PC-9 (cell line): ENCODE measurements at regions of chr20 and their contacts with region 1.

Region 1: DNA sequence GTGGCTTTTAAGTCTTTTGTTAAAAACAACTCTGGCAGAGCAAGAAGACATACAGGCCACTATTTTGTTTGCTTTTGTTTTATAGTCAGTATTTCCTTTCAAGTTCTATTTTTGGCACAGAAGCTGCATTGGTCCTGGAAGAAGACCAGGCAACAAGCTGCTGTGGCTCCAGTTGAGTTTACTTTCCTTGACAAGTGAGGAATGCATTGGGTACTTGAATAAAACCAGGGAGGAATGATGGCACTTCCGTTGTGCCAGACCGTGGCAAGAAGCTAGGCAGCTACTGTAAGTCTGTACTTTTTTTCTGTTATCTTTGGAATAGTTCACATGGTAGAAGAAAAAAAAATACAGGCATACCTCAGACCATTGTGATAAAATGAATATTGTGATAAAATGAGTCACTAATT is 66.3 kb downstream of the NCOA3 start:
- DNase-seq: peak; percentile 71 to 83
- H3K4me3 ChIP-seq: no peak overlapping the region
- H3K27ac ChIP-seq: peak overlapping the region; percentile 61
- H3K4me1 ChIP-seq: peaks cover 58% of the 10 kb centered on the region
- H3K27me3 ChIP-seq: no peaks in the 10 kb centered on the region
- CTCF ChIP-seq: no peak

Region 2: GRCh38 chr20:47181056-47181862 is 386.7 kb before region 1 on chr20:
- CTCF ChIA-PET with region 1: no interaction called
- POLR2A ChIA-PET with region 1: interaction called, 19 read pairs
- intact Hi-C with region 1: no loop called
- DNase-seq: peak; percentile 36 to 79
- H3K4me3 ChIP-seq: no peak overlapping the region
- H3K27ac ChIP-seq: no peak overlapping the region
- H3K4me1 ChIP-seq: no peaks in the 10 kb centered on the region
- H3K27me3 ChIP-seq: no peaks in the 10 kb centered on the region
- CTCF ChIP-seq: no peak

Region 3: DNA sequence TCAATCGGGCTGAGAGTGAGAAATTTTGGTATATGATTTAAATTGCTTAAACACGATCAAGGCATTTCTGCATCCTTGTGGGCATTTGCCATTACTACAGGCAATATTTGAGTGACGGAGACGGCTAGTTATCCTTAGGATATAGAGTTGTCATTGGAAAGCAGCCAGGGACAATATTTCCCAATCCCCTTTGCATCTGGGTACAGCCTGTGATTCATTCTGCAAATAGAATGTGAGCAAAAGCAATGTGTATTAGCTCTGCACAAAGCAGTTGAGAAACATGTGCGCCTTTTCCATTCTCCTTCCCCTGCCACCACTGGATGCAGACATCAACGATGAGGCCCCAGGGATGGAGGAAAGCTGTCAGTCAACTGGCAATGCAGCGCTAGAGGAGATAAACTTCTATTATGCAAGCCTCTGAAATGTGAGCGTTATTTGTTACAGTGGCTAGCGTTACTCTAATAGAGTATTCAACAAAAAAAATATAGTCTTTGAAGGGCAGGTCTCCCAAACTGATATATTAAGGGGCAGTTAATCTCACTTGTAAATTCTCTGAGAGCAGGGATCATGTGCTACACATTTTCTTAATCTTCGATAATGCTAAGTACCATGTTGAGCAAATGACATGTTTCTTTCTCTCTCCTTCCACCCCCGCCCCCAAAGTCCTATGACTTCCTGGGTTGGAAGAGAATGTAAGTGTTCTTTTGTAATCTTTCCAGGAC is 103.5 kb before region 1 on chr20:
- CTCF ChIA-PET with region 1: no interaction called
- POLR2A ChIA-PET with region 1: no interaction called
- intact Hi-C with region 1: no loop called
- DNase-seq: peak; percentile 79 to 99
- H3K4me3 ChIP-seq: no peak overlapping the region; the same call in 1 of the 2 replicates
- H3K27ac ChIP-seq: peak overlapping the region; percentile 73
- H3K4me1 ChIP-seq: peaks cover 29% of the 10 kb centered on the region
- H3K27me3 ChIP-seq: no peaks in the 10 kb centered on the region
- CTCF ChIP-seq: peak; percentile 78

Region 4: GRCh38 chr20:47515843-47516242 is 52.2 kb before region 1 on chr20:
- CTCF ChIA-PET with region 1: no interaction called
- POLR2A ChIA-PET with region 1: interaction called, 12 read pairs
- intact Hi-C with region 1: no loop called
- DNase-seq: no peak
- H3K4me3 ChIP-seq: no peak overlapping the region
- H3K27ac ChIP-seq: peak overlapping the region; percentile 13; the same call in 1 of the 2 replicates
- H3K4me1 ChIP-seq: peaks cover 10% of the 10 kb centered on the region; the same call in 1 of the 2 replicates
- H3K27me3 ChIP-seq: no peaks in the 10 kb centered on the region
- CTCF ChIP-seq: no peak

Region 5: DNA sequence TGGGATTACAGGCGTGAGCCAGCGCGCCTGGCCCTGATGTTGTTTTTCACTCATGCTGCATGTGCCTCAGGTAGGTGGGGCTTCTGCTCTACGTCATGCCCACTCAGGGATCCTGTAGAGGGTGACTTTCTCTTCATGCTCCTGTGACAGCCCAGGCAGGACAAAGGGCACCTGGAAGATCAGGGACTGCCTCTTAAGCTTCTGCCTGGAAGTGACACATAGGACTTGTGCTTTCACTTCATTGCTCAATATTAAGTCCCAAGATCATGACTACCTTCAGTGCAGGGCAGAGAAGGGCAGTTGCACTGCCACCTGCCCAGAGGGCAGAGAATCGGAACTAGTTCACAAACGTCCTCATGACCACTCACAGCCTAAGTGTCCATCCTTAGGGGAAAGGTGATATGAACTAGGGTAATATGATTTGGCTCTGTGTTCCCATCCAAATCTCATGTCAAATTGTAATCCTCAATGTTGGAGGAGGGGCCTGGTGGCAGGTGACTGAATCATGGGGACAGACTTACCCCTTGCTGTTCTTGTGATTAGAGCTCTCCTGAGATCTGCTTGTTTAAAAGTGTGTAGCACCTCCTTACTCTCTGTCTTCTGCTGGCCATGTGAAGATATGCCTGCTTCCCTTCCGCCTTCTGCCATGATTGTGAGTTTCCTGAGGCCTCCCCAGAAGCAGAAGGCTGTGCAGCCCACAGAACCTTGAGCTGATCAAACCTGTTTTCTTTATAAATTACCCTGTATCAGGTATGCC is 466.9 kb after region 1 on chr20:
- CTCF ChIA-PET with region 1: no interaction called
- POLR2A ChIA-PET with region 1: no interaction called
- intact Hi-C with region 1: no loop called
- DNase-seq: peak in 1 of 2 experiments; percentile 88
- H3K4me3 ChIP-seq: no peak overlapping the region
- H3K27ac ChIP-seq: peak overlapping the region; percentile 59
- H3K4me1 ChIP-seq: peaks cover 18% of the 10 kb centered on the region
- H3K27me3 ChIP-seq: no peaks in the 10 kb centered on the region
- CTCF ChIP-seq: no peak